Activated CD8-positive, alpha-beta T cell treated with anti-CD3 and anti-CD28 coated beads for 36 hours (primary cell): ENCODE measurements at regions of chr10 and their contacts with region 1.

Region 1: GRCh38 chr10:102583435-102584417 is 60.6 kb upstream of the TRIM8 start:
- DNase-seq: peak; percentile 92
- ATAC-seq: peak; percentile 99
- H3K4me3 Mint-ChIP-seq: no peak overlapping the region
- H3K27ac Mint-ChIP-seq: no peak overlapping the region
- H3K4me1 Mint-ChIP-seq: peaks cover 4% of the 10 kb centered on the region
- H3K27me3 Mint-ChIP-seq: no peaks in the 10 kb centered on the region
- CTCF ChIP-seq: peak; percentile 91

Region 2: DNA sequence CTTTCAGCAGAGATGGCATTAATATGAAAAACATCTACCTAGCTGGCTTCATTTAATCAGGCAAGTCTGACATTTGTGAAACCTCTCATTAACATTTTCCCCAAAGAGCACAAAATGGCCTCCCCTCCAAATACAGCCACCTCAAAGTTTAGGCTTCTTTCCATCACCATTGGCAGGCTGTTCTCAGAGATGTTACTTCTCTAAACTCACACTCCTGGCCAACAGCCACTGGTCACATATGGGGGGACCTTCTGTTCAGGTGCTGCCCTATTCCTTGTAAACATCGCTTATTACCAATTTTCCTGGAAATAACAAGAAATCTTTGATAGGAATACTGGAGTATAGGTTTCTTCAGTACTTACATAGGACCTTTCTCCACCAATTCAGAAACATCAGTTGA is 268.9 kb before region 1 on chr10:
- CTCF ChIA-PET with region 1: no interaction called
- POLR2A ChIA-PET with region 1: no interaction called
- intact Hi-C with region 1: no loop called
- DNase-seq: no peak
- ATAC-seq: no peak
- H3K4me3 Mint-ChIP-seq: no peak overlapping the region
- H3K27ac Mint-ChIP-seq: no peak overlapping the region
- H3K4me1 Mint-ChIP-seq: peaks cover 30% of the 10 kb centered on the region
- H3K27me3 Mint-ChIP-seq: no peaks in the 10 kb centered on the region
- CTCF ChIP-seq: no peak

Region 3: DNA sequence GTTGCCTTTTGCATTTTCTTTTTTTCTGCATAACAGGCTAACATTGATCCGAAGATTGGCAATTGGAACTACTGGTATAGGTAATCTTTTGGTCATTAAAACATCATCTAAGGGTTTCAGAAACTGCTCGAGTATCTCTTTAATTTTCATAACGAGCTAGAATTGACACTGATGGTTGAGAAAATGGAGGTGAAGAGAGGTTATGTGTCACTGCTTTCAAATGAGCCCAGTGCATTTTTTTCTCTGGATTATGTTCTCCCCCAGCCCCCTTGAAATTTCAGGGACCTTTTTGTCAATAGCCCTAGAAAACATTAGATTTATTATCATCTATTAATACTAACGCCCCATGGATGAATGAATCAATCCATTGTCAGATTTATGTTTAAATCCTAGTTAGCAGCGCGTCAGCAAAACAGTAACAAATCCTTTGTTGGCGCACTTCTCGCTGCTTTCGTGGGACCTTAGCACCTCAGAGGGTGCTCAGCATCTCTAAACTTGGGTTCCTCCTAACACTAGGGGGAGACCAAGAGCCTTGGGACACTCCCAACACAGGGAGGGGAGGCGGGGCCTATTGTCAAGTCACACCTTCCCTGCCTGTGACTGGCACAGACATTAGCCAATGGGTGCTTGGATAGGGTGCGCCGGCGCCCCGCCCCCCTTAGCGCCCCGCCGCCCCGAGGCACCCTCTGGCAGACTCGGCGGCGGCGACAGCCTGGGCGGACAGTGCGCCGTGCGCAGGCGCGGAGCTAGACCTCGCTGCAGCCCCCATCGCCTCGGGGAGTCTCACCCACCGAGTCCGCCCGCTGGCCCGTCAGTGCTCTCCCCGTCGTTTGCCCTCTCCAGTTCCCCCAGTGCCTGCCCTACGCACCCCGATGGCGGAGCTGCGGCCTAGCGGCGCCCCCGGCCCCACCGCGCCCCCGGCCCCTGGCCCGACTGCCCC is 80.2 kb before region 1 on chr10 and contains the start of gene SUFU:
- CTCF ChIA-PET with region 1: interaction called, 84 read pairs
- POLR2A ChIA-PET with region 1: interaction called, 15 read pairs
- intact Hi-C with region 1: loop called (anchors 2 kb)
- DNase-seq: peak; percentile 99
- ATAC-seq: peak; percentile 78
- H3K4me3 Mint-ChIP-seq: no peak within 1 kb of the TSS
- H3K27ac Mint-ChIP-seq: peak within 1 kb of the TSS; percentile 84
- H3K4me1 Mint-ChIP-seq: peaks cover 26% of the 10 kb centered on the region
- H3K27me3 Mint-ChIP-seq: no peaks in the 10 kb centered on the region
- CTCF ChIP-seq: peak; percentile 82
- total RNA-seq, gene SUFU: 8.5 to 8.8 TPM

Region 4: DNA sequence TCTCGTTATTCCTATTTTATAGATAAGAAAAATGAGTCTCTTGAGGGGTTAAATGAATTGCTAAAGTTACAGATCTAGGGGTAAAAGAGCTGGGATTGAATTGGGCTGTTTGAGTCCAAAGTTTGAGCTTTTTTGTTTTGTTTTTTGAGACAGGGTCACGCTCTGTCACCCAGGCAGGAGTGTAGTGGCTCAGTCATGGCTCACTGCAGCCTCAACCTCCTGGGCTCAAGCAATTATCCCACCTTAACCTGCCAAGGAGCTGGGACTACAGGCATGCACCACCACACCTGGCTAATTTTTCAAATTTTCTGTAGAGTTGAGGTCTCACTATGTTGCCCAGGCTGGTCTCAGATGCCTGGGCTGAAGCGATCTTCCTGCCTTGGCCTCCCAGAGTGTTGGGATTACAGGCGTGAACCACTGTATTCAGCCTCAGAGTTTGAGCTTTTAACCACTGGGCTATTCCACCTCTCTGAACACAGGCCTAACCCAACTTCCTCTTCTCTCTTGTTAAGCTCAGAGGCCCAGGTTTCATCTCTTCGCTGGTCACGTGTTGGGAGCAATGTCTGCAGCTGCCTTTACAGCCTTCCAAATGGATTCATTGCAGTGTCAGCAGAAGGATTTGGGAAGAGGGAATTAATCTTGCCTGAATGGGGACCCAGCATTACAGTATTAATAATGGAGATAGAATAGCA is 72.0 kb before region 1 on chr10:
- CTCF ChIA-PET with region 1: interaction called, 19 read pairs
- POLR2A ChIA-PET with region 1: no interaction called
- intact Hi-C with region 1: no loop called
- DNase-seq: no peak
- ATAC-seq: no peak
- H3K4me3 Mint-ChIP-seq: no peak overlapping the region
- H3K27ac Mint-ChIP-seq: no peak overlapping the region
- H3K4me1 Mint-ChIP-seq: peaks cover 17% of the 10 kb centered on the region
- H3K27me3 Mint-ChIP-seq: no peaks in the 10 kb centered on the region
- CTCF ChIP-seq: no peak

Region 5: GRCh38 chr10:102565793-102566192 is 17.9 kb before region 1 on chr10:
- CTCF ChIA-PET with region 1: interaction called, 14 read pairs
- POLR2A ChIA-PET with region 1: no interaction called
- intact Hi-C with region 1: no loop called
- DNase-seq: no peak
- ATAC-seq: no peak
- H3K4me3 Mint-ChIP-seq: no peak overlapping the region
- H3K27ac Mint-ChIP-seq: no peak overlapping the region
- H3K4me1 Mint-ChIP-seq: no peaks in the 10 kb centered on the region
- H3K27me3 Mint-ChIP-seq: no peaks in the 10 kb centered on the region
- CTCF ChIP-seq: no peak

Region 6: GRCh38 chr10:102596506-102596971 is 12.8 kb after region 1 on chr10:
- CTCF ChIA-PET with region 1: interaction called, 29 read pairs
- POLR2A ChIA-PET with region 1: no interaction called
- intact Hi-C with region 1: no loop called
- DNase-seq: peak; percentile 53
- ATAC-seq: peak; percentile 84
- H3K4me3 Mint-ChIP-seq: no peak overlapping the region
- H3K27ac Mint-ChIP-seq: no peak overlapping the region
- H3K4me1 Mint-ChIP-seq: no peaks in the 10 kb centered on the region
- H3K27me3 Mint-ChIP-seq: no peaks in the 10 kb centered on the region
- CTCF ChIP-seq: peak; percentile 77

Region 7: DNA sequence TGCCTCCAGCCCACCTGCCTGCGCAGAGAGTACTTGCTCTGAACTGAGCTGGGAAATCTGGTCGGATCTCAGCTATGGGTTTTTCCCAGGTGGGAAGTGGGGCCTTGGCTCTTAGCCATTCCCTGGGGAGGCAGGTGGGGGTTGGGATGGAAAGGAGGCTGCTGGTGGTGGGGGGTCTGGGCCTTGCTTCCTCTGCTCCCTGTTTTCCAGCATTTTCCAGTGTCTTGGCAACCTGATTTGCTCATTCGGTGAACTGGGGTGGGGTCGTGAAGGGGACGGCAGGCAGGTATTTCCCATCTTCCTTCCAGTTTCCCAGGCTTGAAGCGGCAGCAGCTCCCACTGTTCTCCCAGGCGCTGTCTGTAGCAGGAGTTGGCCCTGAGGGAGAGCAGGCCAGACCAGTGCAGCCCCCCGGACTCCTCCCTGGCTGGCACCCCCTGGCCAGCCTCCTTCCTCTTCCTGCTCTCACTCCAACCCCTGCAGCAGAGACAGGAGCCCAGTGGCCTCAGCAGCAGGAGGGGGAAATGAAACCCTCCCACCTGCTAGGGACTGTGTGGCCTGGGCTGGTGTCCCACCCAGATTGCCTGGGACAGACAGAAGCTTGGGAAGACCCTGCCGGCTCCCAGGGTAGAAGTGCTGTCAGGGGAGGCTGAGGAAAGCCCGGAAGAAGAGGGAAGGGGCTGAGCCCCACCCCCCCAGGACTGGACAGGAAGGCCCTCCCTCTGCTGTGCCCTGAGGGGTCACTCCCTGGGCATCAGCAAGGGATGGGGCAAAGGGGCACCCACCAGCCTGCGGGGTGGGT is 67.1 kb after region 1 on chr10:
- CTCF ChIA-PET with region 1: no interaction called
- POLR2A ChIA-PET with region 1: no interaction called
- intact Hi-C with region 1: no loop called
- DNase-seq: no peak
- ATAC-seq: no peak
- H3K4me3 Mint-ChIP-seq: peak overlapping the region; percentile 63
- H3K27ac Mint-ChIP-seq: peak overlapping the region; percentile 90
- H3K4me1 Mint-ChIP-seq: peaks cover 88% of the 10 kb centered on the region
- H3K27me3 Mint-ChIP-seq: no peaks in the 10 kb centered on the region
- CTCF ChIP-seq: no peak